Activated CD4-positive, alpha-beta T cell treated with anti-CD3 and anti-CD28 coated beads, Interleukin-2, amount 10 ng/mL, durations not matched to agents 24 days and 14 days (primary cell): ENCODE measurements at regions of chr14 and their contacts with region 1.

Region 1: GRCh38 chr14:102591889-102592763 is at the start of gene RCOR1:
- DNase-seq: peak; percentile 99
- H3K4me3 Mint-ChIP-seq: peak within 1 kb of the TSS; percentile 94
- H3K27ac Mint-ChIP-seq: peak within 1 kb of the TSS; percentile 95
- H3K4me1 Mint-ChIP-seq: peaks cover 23% of the 10 kb centered on the region
- H3K27me3 Mint-ChIP-seq: peaks cover 4% of the 10 kb centered on the region
- total RNA-seq, gene RCOR1: 21.8 and 24.0 TPM in 2 replicates

Region 2: GRCh38 chr14:102524466-102525218 is 67.5 kb before region 1 on chr14:
- intact Hi-C with region 1: loop called (anchors 1 kb)
- DNase-seq: peak; percentile 99
- H3K4me3 Mint-ChIP-seq: peak overlapping the region; percentile 94
- H3K27ac Mint-ChIP-seq: peak overlapping the region; percentile 93
- H3K4me1 Mint-ChIP-seq: peaks cover 26% of the 10 kb centered on the region
- H3K27me3 Mint-ChIP-seq: no peaks in the 10 kb centered on the region